Ascending aorta (tissue), 2 donors: ENCODE measurements at regions of chr3 and their contacts with region 1.

Region 1: DNA sequence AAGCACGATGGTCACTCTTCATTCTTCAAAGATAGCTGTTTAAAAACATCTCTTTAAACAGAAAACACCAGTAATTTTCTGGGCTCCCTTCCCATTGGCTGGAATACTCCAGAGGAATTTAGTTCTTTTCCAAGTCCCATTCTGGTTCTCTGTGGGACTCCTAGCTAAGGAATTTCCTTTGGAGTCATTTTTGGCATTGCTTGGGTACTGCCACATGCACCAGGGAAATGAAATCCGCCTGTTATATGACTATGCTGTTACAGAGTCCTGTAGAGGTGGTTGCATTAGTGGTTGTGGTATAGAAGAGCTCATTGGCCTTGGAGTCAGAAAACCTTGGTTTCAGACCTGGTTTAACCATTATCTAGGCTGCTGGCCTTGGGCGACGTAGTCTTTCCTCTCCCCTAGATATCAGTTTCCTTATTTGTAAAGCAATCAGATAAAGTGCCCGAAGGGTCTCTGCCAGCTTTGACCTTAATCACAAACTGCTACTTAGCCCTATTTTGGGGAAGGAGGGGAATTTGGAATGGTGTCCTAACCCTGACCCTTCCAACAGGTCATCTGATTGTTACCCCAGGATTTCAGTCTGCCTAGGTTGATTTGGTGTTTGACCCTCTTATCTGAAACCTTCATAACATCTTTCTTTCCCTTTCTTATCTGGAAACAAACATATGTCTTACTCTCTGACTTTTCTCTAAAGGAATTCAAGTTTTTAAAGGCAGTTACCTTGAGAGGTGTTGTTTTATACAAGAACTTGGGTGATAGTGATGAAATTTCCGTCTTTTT is 13.4 kb downstream of the RTP1 start:
- DNase-seq: peak in 1 of 2 donors; percentile 79
- H3K4me3 ChIP-seq: no peak overlapping the region
- H3K27ac ChIP-seq: peak overlapping the region; percentile 80 to 93
- H3K4me1 ChIP-seq: peaks cover 12 to 44% of the 10 kb centered on the region in 2 donors
- H3K27me3 ChIP-seq: no peaks in the 10 kb centered on the region
- CTCF ChIP-seq: no peak

Region 2: DNA sequence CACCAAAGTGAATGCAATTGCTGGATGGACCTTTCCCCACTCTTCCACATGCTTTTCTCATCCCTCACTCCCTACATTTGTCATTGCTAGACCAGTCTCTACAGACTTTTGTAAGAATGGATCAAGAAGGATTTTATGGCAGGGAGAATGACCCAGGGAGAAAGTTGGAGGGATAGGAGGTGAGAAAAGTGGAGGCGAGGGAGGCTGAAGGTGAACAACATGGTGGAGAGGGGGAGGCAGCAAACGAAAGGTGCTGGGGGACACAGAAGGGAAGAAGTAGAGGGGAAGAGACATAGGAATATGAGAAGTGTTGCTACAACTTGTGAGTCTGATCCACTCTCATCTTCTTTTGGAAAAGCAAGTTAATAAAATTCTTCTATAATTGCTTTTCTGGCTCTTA is 37.8 kb before region 1 on chr3:
- intact Hi-C with region 1: loop called (anchors 5 kb)
- DNase-seq: no peak
- H3K4me3 ChIP-seq: no peak overlapping the region
- H3K27ac ChIP-seq: peak overlapping the region in 1 of 2 donors; percentile 62
- H3K4me1 ChIP-seq: peaks cover 0 to 17% of the 10 kb centered on the region in 2 donors
- H3K27me3 ChIP-seq: no peaks in the 10 kb centered on the region
- CTCF ChIP-seq: no peak

Region 3: GRCh38 chr3:187197057-187197649 is 13.6 kb before region 1 on chr3 and contains the start of gene RTP1:
- intact Hi-C with region 1: loop called (anchors 2 kb)
- DNase-seq: no peak
- H3K4me3 ChIP-seq: no peak within 1 kb of the TSS
- H3K27ac ChIP-seq: no peak within 1 kb of the TSS
- H3K4me1 ChIP-seq: peaks cover 5 to 20% of the 10 kb centered on the region in 2 donors
- H3K27me3 ChIP-seq: no peaks in the 10 kb centered on the region
- CTCF ChIP-seq: no peak
- total RNA-seq, gene RTP1: not detected